Activated CD8-positive, alpha-beta T cell treated with anti-CD3 and anti-CD28 coated beads, Interleukin-2, amount 10 ng/mL, durations not matched to agents 7 days and 5 days (primary cell): ENCODE measurements at regions of chr3 and their contacts with region 1.

Region 1: DNA sequence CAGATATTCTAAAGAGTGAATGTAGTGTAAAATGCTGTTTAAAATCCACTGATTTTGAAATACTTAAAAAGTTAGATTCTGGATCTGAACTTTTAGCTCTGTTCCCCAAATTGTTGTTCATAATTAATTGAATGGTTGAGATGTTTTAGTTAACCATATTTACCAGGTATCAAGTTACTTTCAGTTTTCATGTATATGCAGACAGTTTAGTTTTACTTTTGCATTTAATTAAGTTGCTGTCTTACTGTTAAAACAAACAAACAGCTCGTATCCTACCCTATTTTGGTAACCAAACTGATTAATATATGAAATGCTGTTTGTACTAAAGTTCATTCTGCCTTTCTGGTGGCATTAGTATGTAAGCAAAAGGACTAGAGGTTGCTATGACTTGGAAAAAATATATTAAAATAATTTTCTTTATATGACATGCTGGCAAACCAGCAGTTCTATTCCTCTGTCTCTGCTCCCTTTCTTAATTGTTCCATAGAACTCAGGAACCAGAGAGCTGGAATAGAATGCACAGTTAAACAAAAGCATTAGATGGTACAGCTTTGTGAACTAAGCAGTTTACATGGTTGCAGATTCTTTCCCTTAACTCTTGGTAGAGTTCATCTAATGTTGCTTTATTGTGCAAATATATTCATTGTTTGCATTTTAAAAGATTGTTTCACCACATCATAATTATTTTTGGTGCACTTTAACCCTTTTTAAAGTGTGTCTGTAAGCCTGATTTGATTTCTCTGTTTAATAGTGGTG is 39.5 kb upstream of the SCAANT1 start:
- DNase-seq: no peak
- ATAC-seq: peak; percentile 49
- H3K4me3 Mint-ChIP-seq: peak overlapping the region; percentile 11
- H3K27ac Mint-ChIP-seq: peak overlapping the region; percentile 58
- H3K4me1 Mint-ChIP-seq: peaks cover 39% of the 10 kb centered on the region
- H3K27me3 Mint-ChIP-seq: no peaks in the 10 kb centered on the region

Region 2: DNA sequence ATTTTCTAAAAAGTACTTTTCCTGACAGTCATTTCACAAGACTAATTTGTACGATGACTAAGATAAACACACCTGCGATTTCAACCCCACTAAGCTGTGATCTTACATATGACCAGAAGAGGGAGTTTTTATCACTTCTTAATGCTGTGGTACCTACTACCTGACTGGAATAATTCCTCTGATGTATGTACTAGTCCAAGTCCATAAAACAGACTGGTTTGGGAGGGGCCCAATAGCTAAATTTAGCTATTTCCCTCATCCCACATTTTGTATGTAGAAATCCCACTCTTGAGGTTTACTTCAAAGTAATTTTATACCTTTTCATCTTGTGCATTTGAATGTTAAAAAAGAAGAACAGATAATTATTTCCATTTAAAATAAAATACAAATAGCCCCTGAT is 10.2 kb after region 1 on chr3:
- CTCF ChIA-PET with region 1: interaction called, 16 read pairs
- POLR2A ChIA-PET with region 1: no interaction called
- DNase-seq: no peak
- ATAC-seq: peak; percentile 87
- H3K4me3 Mint-ChIP-seq: no peak overlapping the region
- H3K27ac Mint-ChIP-seq: no peak overlapping the region
- H3K4me1 Mint-ChIP-seq: peaks cover 47% of the 10 kb centered on the region
- H3K27me3 Mint-ChIP-seq: no peaks in the 10 kb centered on the region

Region 3: GRCh38 chr3:63967675-63968611 is 16.3 kb after region 1 on chr3:
- CTCF ChIA-PET with region 1: interaction called, 16 read pairs
- POLR2A ChIA-PET with region 1: interaction called, 10 read pairs
- DNase-seq: peak; percentile 51
- ATAC-seq: peak; percentile 74
- H3K4me3 Mint-ChIP-seq: peak overlapping the region; percentile 79
- H3K27ac Mint-ChIP-seq: peak overlapping the region; percentile 96
- H3K4me1 Mint-ChIP-seq: peaks cover 85% of the 10 kb centered on the region
- H3K27me3 Mint-ChIP-seq: no peaks in the 10 kb centered on the region